Thyroid gland (tissue), 4 donors: ENCODE measurements at regions of chr14 and their contacts with region 1.

Region 1: GRCh38 chr14:58637391-58638230 is at the start of gene DACT1:
- DNase-seq: peak; percentile 78 to 80
- H3K4me3 ChIP-seq: peak within 1 kb of the TSS; percentile 55 to 95 (median 61)
- H3K27ac ChIP-seq: peak within 1 kb of the TSS; percentile 88 to 98 (median 94)
- H3K4me1 ChIP-seq: peaks cover 53 to 56% of the 10 kb centered on the region in 2 donors
- H3K27me3 ChIP-seq: no peaks in the 10 kb centered on the region
- CTCF ChIP-seq: peak in 2 of 6 experiments; percentile 18 to 27
- POLR2A ChIP-seq: peak in 1 of 2 donors; percentile 88
- total RNA-seq, gene DACT1: 10.1 to 34.6 (median 13.0) TPM

Region 2: DNA sequence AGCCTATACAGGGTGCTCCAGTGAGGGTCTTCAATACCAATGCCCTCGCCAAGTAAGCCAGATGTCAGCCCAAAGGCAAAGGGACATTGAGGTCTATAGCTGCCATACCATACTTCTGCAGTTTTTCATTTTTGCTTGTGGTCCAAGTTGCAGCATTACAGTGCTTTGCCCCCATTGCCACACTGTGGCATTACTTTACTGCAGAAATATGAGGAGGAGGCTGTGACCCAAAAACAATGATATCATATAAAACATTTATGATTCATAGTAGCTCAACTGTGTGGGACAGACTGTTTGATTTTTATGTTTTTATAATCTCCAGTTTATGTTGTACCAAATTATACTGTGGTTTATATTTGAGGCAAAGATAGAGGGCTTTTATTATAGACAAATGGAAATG is 146.0 kb before region 1 on chr14:
- intact Hi-C with region 1: loop called (anchors 10 kb)
- DNase-seq: no peak
- H3K4me3 ChIP-seq: no peak overlapping the region
- H3K27ac ChIP-seq: no peak overlapping the region
- H3K4me1 ChIP-seq: no peaks in the 10 kb centered on the region
- H3K27me3 ChIP-seq: no peaks in the 10 kb centered on the region
- CTCF ChIP-seq: no peak
- POLR2A ChIP-seq: no peak

Region 3: GRCh38 chr14:59028476-59029202 is 391.0 kb after region 1 on chr14:
- intact Hi-C with region 1: loop called (anchors 10 kb)
- DNase-seq: peak; percentile 58 to 68
- H3K4me3 ChIP-seq: no peak overlapping the region
- H3K27ac ChIP-seq: no peak overlapping the region
- H3K4me1 ChIP-seq: peaks cover 0 to 7% of the 10 kb centered on the region in 2 donors
- H3K27me3 ChIP-seq: no peaks in the 10 kb centered on the region
- CTCF ChIP-seq: peak; percentile 48 to 81 (median 60)
- POLR2A ChIP-seq: no peak